ENCODE measurements at regions of chr3 and their contacts with region 1.

Region 1: GRCh38 chr3:53375019-53375418 is 27.7 kb upstream of the DCP1A start:
- DNase-seq: peak; percentile 79
- ATAC-seq: peak; percentile 81

Region 2: GRCh38 chr3:53219895-53220483 is 155.0 kb before region 1 on chr3:
- intact Hi-C with region 1: no loop called
- DNase-seq: peak; percentile 90
- ATAC-seq: peak; percentile 83

Region 3: DNA sequence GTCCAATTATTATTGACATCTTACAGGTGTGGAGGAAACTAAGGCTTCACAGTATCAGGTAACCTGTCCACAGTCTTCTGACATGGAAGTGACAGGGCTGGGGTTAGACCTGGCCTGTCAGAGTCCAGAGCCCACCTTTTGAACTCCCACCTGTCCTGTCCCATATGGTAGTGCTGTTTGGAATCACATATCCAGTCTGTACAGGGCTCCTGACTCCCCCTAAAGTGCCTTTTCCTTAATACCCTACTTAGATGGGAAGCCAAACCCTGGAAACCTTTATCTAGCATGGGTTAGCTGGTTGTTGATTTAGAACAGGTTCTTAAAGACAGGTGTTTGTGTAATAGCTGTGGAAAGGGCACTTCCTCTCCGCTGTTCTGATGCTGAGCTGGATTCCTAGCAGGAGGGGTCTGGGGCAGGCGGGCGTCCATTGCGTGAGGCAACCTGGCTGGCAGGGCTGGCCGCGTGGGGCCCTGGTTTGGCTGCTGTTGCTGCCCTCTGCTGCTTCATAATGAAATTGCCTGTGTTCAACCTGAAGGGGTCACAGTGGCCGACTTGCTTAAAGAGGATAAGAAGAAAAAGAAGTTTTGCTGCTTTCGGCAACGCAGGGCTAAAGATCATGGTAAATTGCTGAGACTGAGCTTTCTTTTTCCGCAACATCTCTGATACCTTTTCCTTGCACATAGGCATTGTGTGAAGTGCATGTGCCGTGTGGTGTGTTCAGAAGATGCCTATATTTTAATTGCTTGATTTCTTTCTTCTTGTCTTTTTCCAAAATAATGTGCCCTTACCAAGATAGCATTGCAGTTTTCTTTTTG is 335.0 kb after region 1 on chr3:
- intact Hi-C with region 1: loop called (anchors 5 kb)
- DNase-seq: peak; percentile 80
- ATAC-seq: peak; percentile 89

Measured in sciatic nerve (tissue), 2 donors.